ENCODE measurements at regions of chr1 and their contacts with region 1.

Region 1: DNA sequence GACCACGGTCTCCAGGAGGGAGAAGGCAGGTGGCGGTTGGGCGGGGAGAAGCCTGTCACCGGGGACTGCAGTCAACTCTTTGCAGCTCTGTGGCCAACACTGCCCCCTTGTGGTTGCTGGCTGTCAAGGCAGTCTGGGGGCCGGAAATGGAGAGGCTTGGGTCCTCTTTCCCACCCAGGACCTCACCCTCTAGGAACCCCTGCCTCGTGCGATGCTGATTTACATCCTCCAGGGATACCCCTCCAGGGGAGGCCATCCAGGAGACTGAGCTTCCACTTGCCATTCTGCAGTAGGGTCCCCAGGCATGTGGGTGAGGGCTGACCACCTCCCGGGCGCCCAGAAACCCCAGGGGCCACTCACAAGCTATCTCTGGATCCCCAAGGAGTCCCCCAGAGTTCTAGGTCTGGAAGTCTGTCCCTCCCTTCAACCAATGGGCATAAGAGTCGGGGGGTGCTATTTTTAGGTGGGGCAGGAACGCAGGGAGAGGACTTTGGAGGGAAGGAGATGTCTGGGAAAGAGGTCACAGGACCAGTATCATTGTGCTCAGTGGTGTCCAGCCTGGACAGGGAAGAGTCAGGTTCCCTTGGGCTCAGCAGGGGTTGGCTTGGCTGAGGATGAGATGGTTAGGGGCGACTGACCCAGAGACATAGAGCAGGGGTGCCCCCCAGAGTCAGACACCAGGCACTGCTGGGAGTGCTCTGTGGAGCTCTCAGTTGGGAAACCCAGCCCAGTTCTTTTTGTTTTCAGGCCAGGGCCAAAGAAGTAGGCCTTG is 7.1 kb upstream of the GPR61 start:
- DNase-seq: peak; percentile 70 to 94 (median 86)
- ATAC-seq: peak; percentile 89 to 90 (median 90)
- H3K4me3 ChIP-seq: peak overlapping the region; percentile 2 to 42
- H3K4me3 Mint-ChIP-seq: peak overlapping the region; percentile 74 to 80 (median 77)
- H3K27ac ChIP-seq: peak overlapping the region; percentile 30
- H3K27ac Mint-ChIP-seq: peak overlapping the region; percentile 88 to 90
- H3K4me1 ChIP-seq: peaks cover 10 to 31% of the 10 kb centered on the region in 2 experiments
- H3K4me1 Mint-ChIP-seq: peaks cover 30 to 33% (median 31%) of the 10 kb centered on the region in 3 donors
- H3K27me3 ChIP-seq: peaks cover 0 to 5% of the 10 kb centered on the region in 2 experiments
- H3K27me3 Mint-ChIP-seq: no peaks in the 10 kb centered on the region

Region 2: GRCh38 chr1:109239580-109240095 is 292.9 kb before region 1 on chr1:
- CTCF ChIA-PET with region 1: interaction called, 7 to 10 read pairs
- POLR2A ChIA-PET with region 1: no interaction called
- DNase-seq: peak in 11 of 35 experiments; percentile 21 to 51 (median 28)
- ATAC-seq: peak; percentile 62 to 80 (median 70)
- H3K4me3 ChIP-seq: no peak overlapping the region
- H3K4me3 Mint-ChIP-seq: no peak overlapping the region
- H3K27ac ChIP-seq: no peak overlapping the region
- H3K27ac Mint-ChIP-seq: peak overlapping the region; percentile 61 to 65
- H3K4me1 ChIP-seq: peaks cover 0 to 20% of the 10 kb centered on the region in 2 experiments
- H3K4me1 Mint-ChIP-seq: peaks cover 25 to 35% (median 31%) of the 10 kb centered on the region in 3 donors
- H3K27me3 ChIP-seq: peaks cover 0 to 16% of the 10 kb centered on the region in 2 experiments
- H3K27me3 Mint-ChIP-seq: peaks cover 0 to 5% of the 10 kb centered on the region in 2 donors

Region 3: DNA sequence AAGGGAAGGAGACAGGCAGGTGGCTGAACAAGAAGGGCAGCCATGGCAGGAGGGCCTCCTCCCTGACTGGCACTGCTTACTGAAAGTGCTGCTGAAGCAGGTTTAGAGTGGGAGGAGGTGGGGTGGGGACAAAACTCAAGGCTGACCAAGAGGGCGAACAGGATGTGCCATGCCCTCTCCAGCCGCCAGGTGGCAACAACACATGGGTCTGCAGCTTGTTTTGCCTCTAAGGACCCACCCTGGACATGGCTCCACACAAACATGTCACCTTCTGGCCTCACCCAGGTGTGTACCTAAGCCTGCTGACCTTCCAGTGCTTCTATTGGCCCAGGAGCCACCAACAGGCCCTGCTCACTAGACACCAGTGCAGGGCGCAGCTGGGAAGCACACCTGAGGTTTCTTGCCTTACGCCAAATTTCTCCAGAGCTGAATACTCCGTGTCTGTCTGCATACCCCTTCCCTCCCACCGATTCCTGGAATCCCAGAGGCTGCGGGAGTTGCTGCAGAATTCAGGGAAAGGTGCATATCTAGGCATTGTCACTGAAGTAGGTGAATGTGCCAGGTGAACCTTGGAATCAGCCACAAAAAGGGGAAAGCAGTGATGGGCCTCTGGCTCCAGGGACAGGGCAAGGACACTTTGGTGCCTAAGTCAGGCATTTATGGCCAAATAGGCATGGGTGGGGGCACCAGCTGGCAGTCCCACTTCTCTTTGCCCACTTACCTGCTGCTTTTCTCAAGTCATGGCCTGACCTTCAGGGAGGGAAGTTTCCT is 254.9 kb before region 1 on chr1:
- CTCF ChIA-PET with region 1: interaction called, 13 to 24 read pairs
- POLR2A ChIA-PET with region 1: interaction called in 1 of 2 experiments, 3 read pairs
- DNase-seq: peak in 30 of 35 experiments; percentile 8 to 72 (median 40)
- ATAC-seq: peak; percentile 50 to 78 (median 70)
- H3K4me3 ChIP-seq: no peak overlapping the region
- H3K4me3 Mint-ChIP-seq: no peak overlapping the region
- H3K27ac ChIP-seq: no peak overlapping the region
- H3K27ac Mint-ChIP-seq: no peak overlapping the region
- H3K4me1 ChIP-seq: peaks cover under 1 to 15% of the 10 kb centered on the region in 2 experiments
- H3K4me1 Mint-ChIP-seq: peaks cover 9 to 15% (median 9%) of the 10 kb centered on the region in 3 donors
- H3K27me3 ChIP-seq: peaks cover 0 to 6% of the 10 kb centered on the region in 2 experiments
- H3K27me3 Mint-ChIP-seq: peaks cover 0 to 3% of the 10 kb centered on the region in 2 donors

Region 4: GRCh38 chr1:109454497-109455133 is 77.9 kb before region 1 on chr1:
- CTCF ChIA-PET with region 1: no interaction called
- POLR2A ChIA-PET with region 1: no interaction called
- DNase-seq: no peak
- ATAC-seq: no peak
- H3K4me3 ChIP-seq: no peak overlapping the region
- H3K4me3 Mint-ChIP-seq: no peak overlapping the region
- H3K27ac ChIP-seq: no peak overlapping the region
- H3K27ac Mint-ChIP-seq: no peak overlapping the region
- H3K4me1 ChIP-seq: no peaks in the 10 kb centered on the region
- H3K4me1 Mint-ChIP-seq: no peaks in the 10 kb centered on the region
- H3K27me3 ChIP-seq: peaks cover 3 to 33% of the 10 kb centered on the region in 2 experiments
- H3K27me3 Mint-ChIP-seq: peaks cover 22 to 47% of the 10 kb centered on the region in 2 donors

Region 5: DNA sequence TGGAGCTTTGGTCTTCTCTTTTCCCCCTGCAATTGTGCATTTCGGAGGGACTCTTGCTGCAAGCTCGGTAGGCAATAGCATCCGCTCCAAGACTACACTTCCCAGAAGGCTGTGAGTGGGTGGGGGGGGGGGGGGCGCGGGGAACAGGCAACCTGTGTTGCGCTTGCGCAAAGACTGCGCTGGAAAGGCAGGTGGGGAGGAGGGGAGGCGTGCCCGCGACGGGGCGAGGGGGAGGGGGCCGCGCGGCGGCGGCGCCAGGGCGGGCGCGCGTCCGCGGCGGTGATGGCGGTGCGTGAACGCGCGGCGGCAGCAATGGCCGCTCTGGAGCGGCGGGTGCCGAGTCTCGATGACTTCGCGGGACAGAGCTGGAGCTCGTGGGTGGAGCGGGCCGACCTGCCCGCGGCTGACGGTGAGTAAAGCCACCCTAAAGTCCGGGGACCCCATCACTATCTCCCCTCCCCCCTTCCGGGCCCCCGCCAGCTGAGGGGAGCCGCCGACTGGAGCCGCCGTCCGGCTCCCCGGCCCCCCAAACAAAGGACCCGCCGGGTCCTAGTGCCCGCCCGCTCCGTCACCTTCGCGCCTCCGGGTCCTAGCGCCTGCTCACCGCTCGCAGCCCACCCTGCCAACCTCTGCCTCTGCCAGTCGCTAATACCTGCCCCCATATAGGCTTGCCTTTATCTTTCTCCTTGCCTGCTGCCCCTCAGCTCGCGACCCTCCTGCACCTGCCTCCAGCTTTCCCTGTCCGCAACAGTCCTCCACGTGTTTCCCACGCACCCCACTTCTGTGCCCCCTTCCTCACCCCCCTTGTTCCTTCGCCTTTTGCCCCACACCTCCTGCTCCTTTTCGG is 48.7 kb before region 1 on chr1 and contains the start of gene ATXN7L2:
- CTCF ChIA-PET with region 1: interaction called, 23 to 294 read pairs
- POLR2A ChIA-PET with region 1: interaction called in 1 of 2 experiments, 3 read pairs
- DNase-seq: peak; percentile 82 to 97 (median 92)
- ATAC-seq: peak; percentile 79 to 86 (median 84)
- H3K4me3 ChIP-seq: peak within 1 kb of the TSS; percentile 80 to 84
- H3K4me3 Mint-ChIP-seq: peak within 1 kb of the TSS; percentile 92 to 96 (median 92)
- H3K27ac ChIP-seq: peak within 1 kb of the TSS; percentile 86
- H3K27ac Mint-ChIP-seq: peak within 1 kb of the TSS; percentile 92 to 93
- H3K4me1 ChIP-seq: peaks cover 12 to 24% of the 10 kb centered on the region in 2 experiments
- H3K4me1 Mint-ChIP-seq: peaks cover 32 to 37% (median 35%) of the 10 kb centered on the region in 3 donors
- H3K27me3 ChIP-seq: peaks cover 0 to 6% of the 10 kb centered on the region in 2 experiments
- H3K27me3 Mint-ChIP-seq: peaks cover under 1 to 12% of the 10 kb centered on the region in 2 donors
- total RNA-seq, gene ATXN7L2: 9.7 to 13.2 (median 12.5) TPM

Region 6: DNA sequence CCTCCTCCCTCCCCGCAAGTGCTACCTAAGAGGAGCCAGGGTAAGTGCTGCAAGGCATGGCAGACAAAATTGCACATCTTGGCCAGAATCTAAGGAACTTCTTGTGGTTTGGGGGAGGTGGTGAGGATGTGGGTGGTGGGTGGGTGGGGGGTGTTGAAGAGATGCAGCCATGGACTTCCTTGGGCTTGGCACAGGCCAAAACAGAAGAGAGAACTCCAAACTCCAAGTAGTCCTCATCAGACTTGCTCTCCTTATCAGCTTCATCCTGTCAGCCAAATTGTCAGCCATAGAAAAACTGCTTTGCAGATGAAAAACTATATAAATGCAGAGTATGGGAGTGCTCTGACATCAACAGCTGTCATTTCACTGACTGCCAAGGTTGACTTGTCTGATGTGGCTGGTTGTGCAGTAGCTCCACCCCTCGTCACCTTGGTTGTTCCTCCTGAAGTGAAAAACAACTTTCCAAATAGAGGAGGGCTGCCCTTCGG is 30.1 kb before region 1 on chr1:
- CTCF ChIA-PET with region 1: interaction called, 294 to 375 read pairs
- POLR2A ChIA-PET with region 1: interaction called, 3 to 5 read pairs
- DNase-seq: peak in 33 of 35 experiments; percentile 41 to 88 (median 65)
- ATAC-seq: peak; percentile 86 to 91 (median 88)
- H3K4me3 ChIP-seq: peak overlapping the region; percentile 33 to 46
- H3K4me3 Mint-ChIP-seq: peak overlapping the region; percentile 75 to 96 (median 85)
- H3K27ac ChIP-seq: peak overlapping the region; percentile 81
- H3K27ac Mint-ChIP-seq: peak overlapping the region; percentile 93 to 97
- H3K4me1 ChIP-seq: peaks cover 63 to 98% of the 10 kb centered on the region in 2 experiments
- H3K4me1 Mint-ChIP-seq: peaks cover 91 to 95% (median 94%) of the 10 kb centered on the region in 3 donors
- H3K27me3 ChIP-seq: no peaks in the 10 kb centered on the region
- H3K27me3 Mint-ChIP-seq: no peaks in the 10 kb centered on the region

Region 7: DNA sequence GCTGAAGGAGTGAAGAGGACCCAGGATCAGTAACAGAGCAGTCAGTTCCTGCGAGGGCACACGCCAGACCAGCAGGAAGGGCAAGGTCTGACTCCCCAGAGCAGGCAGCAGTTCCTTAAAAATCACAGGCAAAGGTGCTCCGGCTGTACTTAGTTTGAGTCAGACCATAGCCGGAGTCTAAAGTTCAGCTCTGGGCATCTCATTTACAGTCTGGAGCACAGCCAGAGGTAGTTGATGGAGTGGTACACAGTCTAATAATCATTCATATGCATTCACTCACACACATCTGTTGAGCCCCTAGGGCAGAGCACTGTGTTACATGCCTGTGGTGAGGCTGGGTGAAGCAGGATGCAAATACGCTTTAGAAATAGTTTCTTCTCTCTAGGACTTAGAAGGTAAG is 15.7 kb before region 1 on chr1:
- CTCF ChIA-PET with region 1: interaction called, 11 to 15 read pairs
- POLR2A ChIA-PET with region 1: interaction called in 1 of 2 experiments, 3 read pairs
- DNase-seq: no peak
- ATAC-seq: no peak
- H3K4me3 ChIP-seq: no peak overlapping the region
- H3K4me3 Mint-ChIP-seq: no peak overlapping the region
- H3K27ac ChIP-seq: no peak overlapping the region
- H3K27ac Mint-ChIP-seq: no peak overlapping the region
- H3K4me1 ChIP-seq: peaks cover 0 to 4% of the 10 kb centered on the region in 2 experiments
- H3K4me1 Mint-ChIP-seq: peaks cover 0 to 13% (median 1%) of the 10 kb centered on the region in 3 donors
- H3K27me3 ChIP-seq: peaks cover 0 to 10% of the 10 kb centered on the region in 2 experiments
- H3K27me3 Mint-ChIP-seq: no peaks in the 10 kb centered on the region

Region 8: DNA sequence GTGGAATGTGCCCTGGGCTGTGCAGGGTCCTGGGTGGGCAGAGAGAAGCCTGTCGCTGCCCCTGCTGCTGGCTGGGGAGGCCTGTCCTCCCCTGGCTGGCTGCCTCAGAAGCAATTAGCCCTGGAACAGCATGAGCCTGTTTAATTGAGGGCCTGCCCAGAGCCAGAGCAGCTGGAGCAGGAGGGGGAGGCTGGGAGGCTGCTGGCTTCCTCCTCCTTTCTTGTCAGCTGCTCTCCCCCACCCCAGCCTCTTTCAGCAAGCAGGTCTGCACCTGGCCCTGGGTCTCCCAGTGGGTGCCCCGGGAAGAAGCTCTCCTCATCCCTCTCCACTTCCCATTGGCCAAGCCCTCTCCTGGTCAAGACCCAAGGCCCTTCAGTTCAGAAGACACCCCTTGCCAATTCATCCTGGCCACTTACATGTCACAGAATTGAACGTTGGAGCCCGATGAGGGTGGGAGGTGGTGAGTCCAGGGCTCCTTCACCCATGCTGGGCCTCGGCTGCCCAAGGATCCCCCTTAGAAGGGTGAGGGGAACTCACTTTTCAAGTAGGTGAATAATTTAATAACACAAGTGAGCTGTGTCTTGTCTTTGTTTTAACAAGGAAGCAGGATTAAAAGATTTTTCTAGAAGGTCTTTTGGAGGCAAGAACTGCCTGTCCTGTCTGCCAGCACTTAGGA is 100.3 kb after region 1 on chr1:
- CTCF ChIA-PET with region 1: no interaction called
- POLR2A ChIA-PET with region 1: no interaction called
- DNase-seq: no peak
- ATAC-seq: no peak
- H3K4me3 ChIP-seq: no peak overlapping the region
- H3K4me3 Mint-ChIP-seq: no peak overlapping the region
- H3K27ac ChIP-seq: no peak overlapping the region
- H3K27ac Mint-ChIP-seq: no peak overlapping the region
- H3K4me1 ChIP-seq: peaks cover 4 to 13% of the 10 kb centered on the region in 2 experiments
- H3K4me1 Mint-ChIP-seq: peaks cover 10 to 17% (median 14%) of the 10 kb centered on the region in 3 donors
- H3K27me3 ChIP-seq: no peaks in the 10 kb centered on the region
- H3K27me3 Mint-ChIP-seq: no peaks in the 10 kb centered on the region